ENCODE measurements at regions of chr1 and their contacts with region 1.

Region 1: GRCh38 chr1:159161001-159161718 is 10.3 kb upstream of the CADM3 start:
- DNase-seq: peak; percentile 78
- H3K27ac ChIP-seq: peak overlapping the region; percentile 67
- CTCF ChIP-seq: peak; percentile 97

Region 2: DNA sequence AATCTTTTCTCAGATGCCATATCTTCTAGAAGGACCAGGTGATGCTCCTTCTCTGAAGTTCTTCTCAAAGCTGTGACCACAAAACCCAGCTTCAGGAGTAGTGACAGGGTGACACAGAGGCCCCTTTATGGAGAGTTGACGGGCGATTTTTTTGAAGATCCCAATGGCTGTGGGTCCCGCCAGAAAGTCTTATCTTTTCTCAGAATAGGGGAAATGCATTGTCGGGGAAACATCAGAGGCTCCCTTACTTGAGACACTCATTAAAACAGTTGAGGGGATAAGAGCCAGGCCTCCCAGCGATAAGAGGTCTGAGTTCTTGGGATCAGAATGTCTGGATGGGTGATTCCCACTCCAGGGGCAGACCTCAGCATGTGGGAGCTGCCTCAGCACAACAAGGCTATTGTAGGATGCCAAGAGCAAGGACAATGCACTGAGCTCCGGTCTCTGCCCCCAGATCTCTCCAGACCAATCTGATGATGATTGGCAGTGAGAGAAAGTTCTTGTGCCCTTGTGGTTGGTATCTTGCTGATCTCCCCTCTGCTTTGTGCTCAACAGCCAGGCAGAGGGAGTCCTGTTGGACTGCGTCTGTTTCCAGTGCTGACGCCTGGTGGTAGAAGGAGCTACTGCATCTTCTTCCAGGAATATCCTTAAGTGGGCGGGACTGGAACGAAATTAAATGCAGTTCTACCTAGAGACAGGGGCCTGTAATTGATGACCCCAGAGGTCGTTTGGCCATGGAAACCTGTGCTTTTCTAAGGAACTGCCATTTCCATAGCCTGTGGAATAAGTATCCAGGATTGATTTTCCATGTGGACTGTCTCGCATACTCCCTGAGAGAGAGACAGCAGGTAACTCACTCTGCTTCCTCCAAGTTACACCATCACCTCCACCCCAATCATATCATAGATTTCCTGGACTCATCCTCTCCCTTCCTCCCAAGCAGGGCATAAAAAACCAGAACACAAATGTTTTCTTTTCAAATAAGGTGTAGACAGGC is 36.7 kb after region 1 on chr1:
- CTCF ChIA-PET with region 1: interaction called, 23 read pairs
- POLR2A ChIA-PET with region 1: no interaction called
- DNase-seq: peak; percentile 62
- H3K27ac ChIP-seq: no peak overlapping the region
- CTCF ChIP-seq: peak; percentile 89

Measured in RWPE1 (cell line).